H1 (cell line): ENCODE measurements at regions of chr11 and their contacts with region 1.

Region 1: DNA sequence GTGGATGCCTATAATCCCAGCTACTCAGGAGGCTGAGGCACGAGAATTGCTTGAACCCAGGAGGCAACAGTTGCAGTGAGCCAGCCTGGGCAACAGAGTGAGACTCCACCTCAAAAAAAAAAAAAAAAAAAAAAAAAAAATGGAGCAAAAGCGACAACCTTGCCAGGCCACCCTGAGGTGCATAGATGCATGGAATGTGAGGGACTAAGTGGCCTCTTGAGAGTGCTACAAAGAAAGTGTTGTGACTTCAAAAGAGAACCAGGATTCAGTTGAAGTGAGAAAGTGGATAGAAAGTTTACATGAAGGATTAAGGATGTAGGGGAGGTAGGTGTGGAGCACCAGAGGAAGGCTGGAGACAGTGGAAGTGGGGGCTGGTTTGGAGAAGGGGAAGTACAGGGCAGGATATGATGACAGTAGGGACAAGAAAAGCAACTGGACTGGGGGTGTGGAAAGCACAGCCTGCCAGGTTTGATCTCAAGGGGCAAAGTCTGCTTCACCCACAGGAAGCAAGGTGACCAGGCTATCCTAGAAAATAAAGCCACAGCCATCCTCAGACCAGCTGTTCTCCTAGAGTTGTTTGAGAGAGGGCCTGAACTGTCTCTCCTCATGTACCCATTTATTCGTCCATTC is 36.0 kb upstream of the OLFML1 start:
- DNase-seq: no peak
- H3K4me3 ChIP-seq: no peak overlapping the region
- H3K27ac ChIP-seq: no peak overlapping the region
- H3K4me1 ChIP-seq: no peaks in the 10 kb centered on the region; a peak in 1 of 7 replicates
- H3K27me3 ChIP-seq: no peaks in the 10 kb centered on the region
- CTCF ChIP-seq: no peak
- EP300 ChIP-seq: no peak
- POLR2A ChIP-seq: no peak
- RAD21 ChIP-seq: no peak

Region 2: DNA sequence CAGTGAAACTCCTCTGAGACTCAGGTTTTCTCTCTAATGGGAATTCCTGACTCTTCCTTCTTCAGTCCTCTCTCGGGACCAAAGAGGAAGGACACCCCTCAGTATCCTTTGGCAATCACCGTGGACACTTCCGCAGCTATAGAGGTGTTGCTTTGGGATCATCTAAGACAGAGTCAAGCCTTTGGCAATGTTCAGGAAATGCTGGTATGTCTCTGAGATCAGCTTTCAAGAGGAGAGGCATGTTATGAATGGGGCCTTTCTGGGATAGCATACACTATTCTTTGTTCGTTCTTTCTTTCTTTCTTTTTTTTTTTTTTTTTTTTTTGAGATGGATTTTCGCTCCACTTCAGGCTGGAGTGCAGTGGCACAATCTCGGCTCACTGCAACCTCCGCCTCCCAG is 21.7 kb after region 1 on chr11:
- CTCF ChIA-PET with region 1: interaction called, 10 read pairs
- POLR2A ChIA-PET with region 1: no interaction called
- DNase-seq: no peak
- H3K4me3 ChIP-seq: no peak overlapping the region
- H3K27ac ChIP-seq: no peak overlapping the region
- H3K4me1 ChIP-seq: no peaks in the 10 kb centered on the region
- H3K27me3 ChIP-seq: no peaks in the 10 kb centered on the region
- CTCF ChIP-seq: no peak
- EP300 ChIP-seq: no peak
- POLR2A ChIP-seq: no peak
- RAD21 ChIP-seq: no peak

Region 3: GRCh38 chr11:7622721-7623120 is 173.4 kb after region 1 on chr11:
- CTCF ChIA-PET with region 1: no interaction called
- POLR2A ChIA-PET with region 1: no interaction called
- DNase-seq: no peak
- H3K4me3 ChIP-seq: no peak overlapping the region
- H3K27ac ChIP-seq: no peak overlapping the region
- H3K4me1 ChIP-seq: peaks cover 0 to 9% (median 5%) of the 10 kb centered on the region in 4 experiments; a peak in 4 of 7 replicates
- H3K27me3 ChIP-seq: no peaks in the 10 kb centered on the region
- CTCF ChIP-seq: no peak
- EP300 ChIP-seq: no peak
- POLR2A ChIP-seq: no peak
- RAD21 ChIP-seq: no peak